ENCODE measurements at regions of chr1 and their contacts with region 1.

Region 1: DNA sequence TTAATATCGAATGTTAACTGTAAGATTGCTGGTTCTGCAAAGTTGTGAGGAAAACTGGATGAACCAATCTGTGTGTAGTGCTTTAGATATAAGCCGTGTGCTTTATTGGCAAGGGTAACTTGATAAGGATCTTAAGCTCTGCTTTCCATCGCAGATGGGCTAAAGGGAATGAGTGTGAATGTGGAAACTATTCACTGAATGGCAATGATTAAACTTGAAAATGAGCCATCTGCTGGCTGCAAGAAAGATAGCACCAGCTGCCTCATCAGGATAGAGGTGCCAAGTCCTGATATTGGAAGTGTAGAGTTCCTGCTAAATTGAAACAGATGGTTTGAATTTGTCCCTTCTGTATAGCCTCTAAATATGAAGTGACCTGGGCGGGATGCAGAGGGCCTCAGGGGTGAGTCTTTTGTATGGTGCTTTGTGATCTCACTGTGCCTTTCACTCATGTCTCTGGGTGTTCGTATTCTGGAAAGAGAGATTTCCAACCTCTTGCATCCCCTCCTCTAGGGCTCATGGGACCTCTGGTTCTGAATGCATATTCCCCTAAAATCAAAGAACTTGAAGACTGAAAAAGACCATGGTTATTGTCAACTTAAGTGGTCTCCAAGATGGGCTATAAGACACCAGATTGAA is 9.2 kb downstream of the FCRL3 start:
- DNase-seq: peak; percentile 21
- ATAC-seq: peak; percentile 86
- H3K4me3 ChIP-seq: no peak overlapping the region
- H3K27ac ChIP-seq: no peak overlapping the region
- H3K4me1 ChIP-seq: no peaks in the 10 kb centered on the region
- H3K27me3 ChIP-seq: peaks cover 14% of the 10 kb centered on the region; the same call in 1 of the 2 replicates
- CTCF ChIP-seq: peak; percentile 43 to 64 (median 57)
- POLR2A ChIP-seq: no peak
- RAD21 ChIP-seq: peak; percentile 46

Region 2: DNA sequence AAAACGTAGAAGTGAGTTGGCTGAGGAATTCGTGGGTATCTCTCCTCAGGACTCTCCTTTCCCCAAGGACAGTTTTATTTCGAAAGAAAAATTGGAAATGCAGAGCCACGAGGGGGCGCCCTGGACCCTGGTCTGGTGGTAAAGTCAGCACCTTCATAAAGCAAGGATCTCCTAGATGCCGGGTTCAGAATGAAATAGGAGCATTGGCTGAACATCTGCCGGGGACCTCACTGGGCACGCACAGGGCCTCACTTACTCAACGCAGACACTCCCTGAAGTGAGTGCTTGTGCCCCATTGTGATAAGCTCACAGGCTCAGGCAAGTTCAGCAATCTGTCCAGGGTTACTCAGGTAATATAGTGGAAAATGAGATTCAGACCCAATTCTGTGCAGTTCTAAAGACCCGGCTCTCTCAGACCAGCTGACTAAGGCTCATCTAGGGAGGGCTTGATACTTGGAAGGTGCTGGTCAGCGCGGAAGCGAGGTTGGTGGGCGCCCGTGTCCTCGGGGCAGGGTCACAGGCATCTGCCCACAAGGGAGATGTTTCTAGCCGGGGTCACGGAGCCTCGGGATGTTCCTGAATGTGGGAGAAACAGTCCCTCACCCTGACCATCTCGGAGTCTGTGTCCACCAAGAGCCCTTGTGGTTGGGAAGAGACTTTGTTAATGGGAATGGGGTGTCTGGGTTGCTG is 497.6 kb before region 1 on chr1:
- CTCF ChIA-PET with region 1: no interaction called
- POLR2A ChIA-PET with region 1: no interaction called
- RAD21 ChIA-PET with region 1: no interaction called
- intact Hi-C with region 1: loop called (anchors 5 kb)
- DNase-seq: peak; percentile 57
- ATAC-seq: peak; percentile 75
- H3K4me3 ChIP-seq: no peak overlapping the region
- H3K27ac ChIP-seq: no peak overlapping the region
- H3K4me1 ChIP-seq: peaks cover 0 to 5% of the 10 kb centered on the region in 2 experiments; a peak in 1 of 4 replicates
- H3K27me3 ChIP-seq: no peaks in the 10 kb centered on the region
- CTCF ChIP-seq: peak; percentile 67 to 84 (median 75); a peak in 5 of 6 replicates
- POLR2A ChIP-seq: no peak
- RAD21 ChIP-seq: peak; percentile 62

Region 3: DNA sequence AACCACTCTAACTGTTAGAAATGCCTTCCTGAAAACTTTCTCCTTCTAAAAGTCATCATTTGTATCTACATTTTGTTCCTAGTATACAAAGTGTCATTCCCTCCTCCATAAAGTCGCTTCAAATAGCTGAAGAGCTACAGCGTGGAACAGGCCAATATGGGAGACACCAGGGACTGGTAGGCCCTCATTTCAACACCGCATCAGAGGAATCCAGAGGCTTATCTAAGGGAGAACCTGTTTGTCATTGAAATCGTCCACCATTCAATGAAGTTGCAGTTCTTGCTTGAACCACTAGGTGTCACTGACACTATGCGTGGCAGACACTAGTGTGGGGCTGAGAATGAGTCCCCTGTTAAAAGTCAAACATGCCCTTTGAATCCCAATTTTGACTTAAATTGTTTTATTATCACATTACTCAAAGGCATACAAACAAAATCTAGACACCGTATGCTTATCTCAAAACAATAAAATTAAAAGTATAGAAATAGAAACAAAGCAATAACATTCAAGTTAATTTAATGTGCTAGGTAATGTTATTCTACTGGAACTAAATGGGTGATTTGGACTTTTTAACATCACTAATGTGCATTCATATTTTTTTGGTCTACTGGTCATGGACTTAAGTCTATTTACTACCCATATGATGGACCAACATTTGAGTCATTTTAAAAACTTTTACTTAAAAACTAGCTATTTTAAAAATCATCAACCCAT is 321.4 kb before region 1 on chr1:
- CTCF ChIA-PET with region 1: no interaction called
- POLR2A ChIA-PET with region 1: no interaction called
- RAD21 ChIA-PET with region 1: no interaction called
- intact Hi-C with region 1: loop called (anchors 2 kb)
- DNase-seq: peak; percentile 33
- ATAC-seq: peak; percentile 96
- H3K4me3 ChIP-seq: no peak overlapping the region
- H3K27ac ChIP-seq: no peak overlapping the region
- H3K4me1 ChIP-seq: no peaks in the 10 kb centered on the region
- H3K27me3 ChIP-seq: 0 out of 2 replicates have a peak, but pooled peaks cover under 1% of the 10 kb centered on the region
- CTCF ChIP-seq: peak; percentile 73 to 88 (median 83)
- POLR2A ChIP-seq: no peak
- RAD21 ChIP-seq: peak; percentile 75

Region 4: GRCh38 chr1:157431751-157432150 is 259.7 kb before region 1 on chr1:
- CTCF ChIA-PET with region 1: no interaction called
- POLR2A ChIA-PET with region 1: no interaction called
- RAD21 ChIA-PET with region 1: no interaction called
- intact Hi-C with region 1: no loop called
- DNase-seq: no peak
- ATAC-seq: no peak
- H3K4me3 ChIP-seq: no peak overlapping the region
- H3K27ac ChIP-seq: no peak overlapping the region
- H3K4me1 ChIP-seq: no peaks in the 10 kb centered on the region
- H3K27me3 ChIP-seq: peaks cover 54% of the 10 kb centered on the region
- CTCF ChIP-seq: no peak
- POLR2A ChIP-seq: no peak
- RAD21 ChIP-seq: no peak

Region 5: DNA sequence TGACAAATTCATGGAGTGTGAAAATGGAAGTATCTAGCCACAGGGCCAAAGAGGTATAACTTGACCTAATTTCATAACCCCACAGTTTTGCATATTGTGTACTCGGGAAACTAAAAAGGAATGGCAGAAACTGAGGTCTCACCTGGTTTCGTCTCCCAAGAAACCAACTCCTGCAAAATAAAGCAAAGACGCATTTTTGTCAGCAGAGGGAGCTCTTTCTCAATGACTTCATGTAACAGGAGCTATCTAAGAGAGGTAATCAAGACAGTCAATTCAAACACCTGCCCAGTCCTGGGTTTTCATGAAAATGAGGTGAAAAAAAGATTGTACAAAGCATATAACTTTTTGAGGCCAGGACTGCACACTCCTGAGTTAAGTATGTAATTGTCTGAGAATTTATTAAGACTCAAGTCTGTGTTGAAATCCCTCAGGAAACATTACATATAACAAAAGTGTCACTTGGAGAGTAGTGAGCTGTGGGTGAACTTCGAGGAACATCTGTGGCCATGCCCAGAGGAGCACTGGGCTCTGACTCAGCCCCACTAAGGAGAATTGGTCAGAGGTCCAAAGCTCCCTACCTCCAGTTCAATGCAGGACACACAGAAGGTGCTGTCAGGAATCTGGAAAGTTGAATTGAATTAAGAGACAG is 111.1 kb before region 1 on chr1:
- CTCF ChIA-PET with region 1: interaction called, 22 read pairs
- POLR2A ChIA-PET with region 1: no interaction called
- RAD21 ChIA-PET with region 1: interaction called in 1 of 2 experiments, 6 read pairs
- intact Hi-C with region 1: loop called (anchors 2 kb)
- DNase-seq: peak; percentile 71
- ATAC-seq: peak; percentile 82
- H3K4me3 ChIP-seq: no peak overlapping the region
- H3K27ac ChIP-seq: no peak overlapping the region
- H3K4me1 ChIP-seq: no peaks in the 10 kb centered on the region
- H3K27me3 ChIP-seq: peaks cover 29% of the 10 kb centered on the region
- CTCF ChIP-seq: peak; percentile 49 to 78 (median 61); a peak in 5 of 6 replicates
- POLR2A ChIP-seq: no peak
- RAD21 ChIP-seq: peak; percentile 59

Region 6: DNA sequence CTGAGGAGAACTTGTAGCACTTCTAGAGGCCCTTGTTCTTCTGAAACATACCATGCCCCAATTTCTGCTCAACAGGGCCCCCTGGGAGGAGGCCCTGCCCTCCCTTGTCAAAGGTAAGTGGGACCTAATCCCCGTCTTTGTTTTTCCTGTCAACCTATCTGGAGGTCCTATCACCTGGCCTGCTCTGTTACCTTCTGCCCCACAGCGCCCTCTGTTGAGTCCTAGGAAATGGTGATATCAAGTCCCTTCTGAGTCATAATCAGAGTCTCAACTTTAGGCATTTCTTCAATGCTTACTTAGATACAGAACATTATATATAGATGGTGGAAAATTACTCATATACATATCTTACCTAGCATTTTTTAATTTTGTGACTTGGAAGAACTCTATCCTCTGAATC is 65.3 kb before region 1 on chr1:
- CTCF ChIA-PET with region 1: no interaction called
- POLR2A ChIA-PET with region 1: no interaction called
- RAD21 ChIA-PET with region 1: no interaction called
- intact Hi-C with region 1: no loop called
- DNase-seq: peak; percentile 34
- ATAC-seq: peak; percentile 83
- H3K4me3 ChIP-seq: no peak overlapping the region
- H3K27ac ChIP-seq: no peak overlapping the region
- H3K4me1 ChIP-seq: no peaks in the 10 kb centered on the region
- H3K27me3 ChIP-seq: peaks cover 36% of the 10 kb centered on the region
- CTCF ChIP-seq: peak; percentile 32 to 77 (median 71); a peak in 5 of 6 replicates
- POLR2A ChIP-seq: no peak
- RAD21 ChIP-seq: peak; percentile 35

Measured in HCT116 (cell line).